K562 (cell line): ENCODE measurements at regions of chr22 and their contacts with region 1.

Region 1: DNA sequence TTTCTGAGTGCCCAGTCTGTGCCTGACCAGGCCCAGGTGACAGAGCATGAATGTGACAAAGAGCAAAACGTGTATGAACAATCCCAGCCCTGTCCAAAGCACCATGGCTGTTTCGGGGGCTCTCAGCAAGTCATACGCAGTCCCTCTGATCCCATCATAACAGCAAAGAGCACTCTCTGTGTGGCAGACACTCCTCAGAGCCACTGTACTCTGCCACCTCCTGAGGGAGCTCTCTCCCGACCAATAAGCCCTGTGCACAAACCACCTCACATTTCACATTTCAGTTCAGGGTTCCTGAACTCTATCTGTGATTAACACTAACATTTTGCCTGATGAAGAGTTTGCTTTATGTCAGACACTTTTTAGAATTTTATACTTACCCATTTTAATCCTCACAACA is 6.6 kb downstream of the DGCR2 start:
- DNase-seq: peak in 1 of 4 experiments; percentile 59
- ATAC-seq: peak; percentile 68
- H3K4me3 ChIP-seq: no peak overlapping the region
- H3K27ac ChIP-seq: no peak overlapping the region
- H3K4me1 ChIP-seq: peaks cover 36 to 41% of the 10 kb centered on the region in 2 experiments
- H3K27me3 ChIP-seq: no peaks in the 10 kb centered on the region
- CTCF ChIP-seq: peak; percentile 56 to 75 (median 58)
- EP300 ChIP-seq: no peak
- POLR2A ChIP-seq: no peak
- RAD21 ChIP-seq: peak in 1 of 2 experiments; percentile 67; a peak in 2 of 4 replicates

Region 2: GRCh38 chr22:18966748-18967147 is 148.9 kb before region 1 on chr22:
- CTCF ChIA-PET with region 1: no interaction called
- POLR2A ChIA-PET with region 1: no interaction called
- in situ Hi-C with region 1: no loop called
- intact Hi-C with region 1: no loop called
- DNase-seq: no peak
- ATAC-seq: no peak
- H3K4me3 ChIP-seq: no peak overlapping the region
- H3K27ac ChIP-seq: no peak overlapping the region
- H3K4me1 ChIP-seq: peaks cover 0 to 42% of the 10 kb centered on the region in 2 experiments; a peak in 2 of 5 replicates
- H3K27me3 ChIP-seq: peaks cover 20 to 61% of the 10 kb centered on the region in 2 experiments; a peak in 4 of 5 replicates
- CTCF ChIP-seq: no peak
- EP300 ChIP-seq: no peak
- POLR2A ChIP-seq: no peak
- RAD21 ChIP-seq: no peak

Region 3: GRCh38 chr22:19130959-19131684 is 15.5 kb after region 1 on chr22 and contains the start of gene TSSK2:
- CTCF ChIA-PET with region 1: no interaction called
- POLR2A ChIA-PET with region 1: interaction called, 44 read pairs
- in situ Hi-C with region 1: no loop called
- intact Hi-C with region 1: no loop called
- DNase-seq: no peak
- ATAC-seq: no peak
- H3K4me3 ChIP-seq: no peak within 1 kb of the TSS
- H3K27ac ChIP-seq: no peak within 1 kb of the TSS
- H3K4me1 ChIP-seq: peaks cover 0 to 45% of the 10 kb centered on the region in 2 experiments; a peak in 2 of 5 replicates
- H3K27me3 ChIP-seq: peaks cover 3 to 11% of the 10 kb centered on the region in 2 experiments; a peak in 4 of 5 replicates
- CTCF ChIP-seq: 0 out of 6 replicates have a peak, but pooled peaks of 1 of the 3 experiments have one; percentile 2
- EP300 ChIP-seq: no peak
- POLR2A ChIP-seq: no peak
- RAD21 ChIP-seq: no peak
- polyA plus RNA-seq, gene TSSK2: not detected

Region 4: DNA sequence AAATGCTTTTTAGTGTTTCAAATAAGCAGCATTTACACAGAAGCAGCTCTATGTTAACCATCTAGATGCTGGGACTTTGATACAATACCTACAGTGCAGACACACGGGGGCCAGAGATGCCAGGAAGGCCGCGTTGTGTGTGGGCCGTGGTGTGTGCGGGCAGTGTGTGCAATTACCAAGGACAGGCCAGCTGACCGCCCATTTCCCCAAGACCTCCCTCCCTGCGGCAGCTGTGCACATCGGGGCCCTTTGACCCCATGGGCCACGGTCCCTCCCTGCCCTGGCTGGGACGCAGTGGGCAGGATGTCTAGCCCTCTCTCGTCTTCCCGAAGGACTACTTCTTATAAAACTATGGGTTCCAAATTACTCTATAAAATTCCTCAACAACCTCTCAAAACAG is 137.5 kb after region 1 on chr22:
- CTCF ChIA-PET with region 1: no interaction called
- POLR2A ChIA-PET with region 1: no interaction called
- in situ Hi-C with region 1: no loop called
- intact Hi-C with region 1: no loop called
- DNase-seq: no peak
- ATAC-seq: peak; percentile 43
- H3K4me3 ChIP-seq: no peak overlapping the region
- H3K27ac ChIP-seq: no peak overlapping the region
- H3K4me1 ChIP-seq: peaks cover 0 to 3% of the 10 kb centered on the region in 2 experiments; a peak in 2 of 5 replicates
- H3K27me3 ChIP-seq: peaks cover 8 to 15% of the 10 kb centered on the region in 2 experiments; a peak in 4 of 5 replicates
- CTCF ChIP-seq: no peak
- EP300 ChIP-seq: no peak
- POLR2A ChIP-seq: no peak
- RAD21 ChIP-seq: no peak